ENCODE measurements at regions of chr6 and their contacts with region 1.

Region 1: DNA sequence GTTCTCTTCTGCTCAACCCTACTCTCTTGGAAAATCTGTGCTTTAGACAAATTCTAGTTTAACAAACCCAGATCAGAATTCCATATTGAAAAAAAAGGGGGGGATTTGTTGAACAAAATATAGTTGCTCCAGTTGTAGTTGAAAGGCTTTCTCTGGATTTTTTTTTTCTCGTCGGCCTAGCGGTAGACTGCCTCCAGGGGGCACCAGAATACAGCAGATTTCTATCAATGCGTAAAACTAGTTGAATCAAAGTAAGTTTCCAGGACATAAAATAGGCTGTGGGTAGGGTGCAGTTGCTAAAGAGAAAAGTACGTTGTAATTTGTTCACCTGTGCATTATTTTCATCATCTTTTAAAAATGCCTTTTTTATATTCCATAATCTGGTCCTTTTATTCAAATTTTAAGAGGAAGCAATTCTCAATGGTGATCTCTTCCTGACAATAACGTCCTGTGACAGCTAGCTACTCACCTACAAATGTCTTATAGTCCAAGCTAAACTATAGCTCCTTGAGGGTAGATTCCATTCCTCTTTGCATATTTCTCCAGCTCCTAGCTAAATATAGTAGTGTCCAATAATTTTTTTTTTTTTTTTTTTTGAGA is 105.4 kb downstream of the PERP start:
- DNase-seq: peak; percentile 53
- ATAC-seq: peak; percentile 70
- H3K4me3 ChIP-seq: no peak overlapping the region
- H3K27ac ChIP-seq: no peak overlapping the region
- H3K4me1 ChIP-seq: no peaks in the 10 kb centered on the region
- H3K27me3 ChIP-seq: peaks cover 9% of the 10 kb centered on the region
- CTCF ChIP-seq: peak; percentile 90
- POLR2A ChIP-seq: no peak
- RAD21 ChIP-seq: peak; percentile 91

Region 2: DNA sequence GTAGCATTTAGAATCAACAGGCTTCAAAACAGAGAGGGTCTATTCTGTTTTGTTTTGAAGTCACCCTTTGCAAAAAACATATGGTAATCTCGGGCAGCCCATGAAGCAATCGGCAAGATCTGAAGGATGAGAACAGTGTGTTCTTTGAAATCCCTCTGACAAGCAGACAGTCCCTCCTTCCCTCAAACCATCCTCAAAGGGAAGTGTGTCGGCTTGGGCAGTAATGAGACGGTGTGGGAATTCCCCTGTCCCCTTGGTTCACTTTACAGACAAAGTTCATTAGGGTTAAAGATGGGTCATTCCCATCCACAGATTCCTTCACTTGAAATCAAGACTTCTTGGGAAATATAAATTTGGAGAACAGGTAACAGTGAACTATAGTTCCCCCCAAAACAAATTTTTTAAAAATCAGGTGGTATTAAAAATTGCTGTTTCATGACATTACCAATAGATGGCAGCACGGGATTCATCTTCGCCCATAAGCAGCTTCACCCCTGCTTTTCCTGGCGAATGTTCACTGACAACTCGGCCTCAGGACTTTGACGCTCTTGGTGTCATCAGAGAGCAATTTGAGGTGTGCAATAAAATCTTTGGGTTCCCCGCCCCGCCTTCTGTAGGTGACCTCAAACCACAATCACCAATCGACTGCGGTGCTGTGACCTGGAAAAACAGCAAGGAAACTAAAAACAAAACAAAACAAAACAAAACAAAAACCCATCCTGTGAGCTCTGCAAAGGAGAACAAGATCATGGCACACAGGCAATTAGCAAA is 294.1 kb before region 1 on chr6:
- CTCF ChIA-PET with region 1: no interaction called
- POLR2A ChIA-PET with region 1: no interaction called
- dilution Hi-C with region 1: no loop called
- in situ Hi-C with region 1: no loop called
- intact Hi-C with region 1: loop called (anchors 1 kb)
- DNase-seq: peak; percentile 86
- ATAC-seq: peak; percentile 78
- H3K4me3 ChIP-seq: no peak overlapping the region; the same call in 1 of the 2 replicates
- H3K27ac ChIP-seq: no peak overlapping the region
- H3K4me1 ChIP-seq: no peaks in the 10 kb centered on the region; the same call in 1 of the 2 replicates
- H3K27me3 ChIP-seq: no peaks in the 10 kb centered on the region
- CTCF ChIP-seq: peak; percentile 89
- POLR2A ChIP-seq: no peak
- RAD21 ChIP-seq: peak; percentile 89

Region 3: GRCh38 chr6:138109042-138109997 is 107.5 kb after region 1 on chr6:
- CTCF ChIA-PET with region 1: interaction called, 15 read pairs
- POLR2A ChIA-PET with region 1: interaction called, 4 read pairs
- dilution Hi-C with region 1: no loop called
- in situ Hi-C with region 1: loop called (anchors 5 kb)
- intact Hi-C with region 1: loop called (anchors 1 kb)
- DNase-seq: peak; percentile 70
- ATAC-seq: peak; percentile 53; the same call in 1 of the 2 replicates
- H3K4me3 ChIP-seq: no peak overlapping the region
- H3K27ac ChIP-seq: no peak overlapping the region
- H3K4me1 ChIP-seq: peaks cover 9% of the 10 kb centered on the region
- H3K27me3 ChIP-seq: peaks cover 13% of the 10 kb centered on the region
- CTCF ChIP-seq: peak; percentile 98
- POLR2A ChIP-seq: no peak
- RAD21 ChIP-seq: peak; percentile 95

Region 4: DNA sequence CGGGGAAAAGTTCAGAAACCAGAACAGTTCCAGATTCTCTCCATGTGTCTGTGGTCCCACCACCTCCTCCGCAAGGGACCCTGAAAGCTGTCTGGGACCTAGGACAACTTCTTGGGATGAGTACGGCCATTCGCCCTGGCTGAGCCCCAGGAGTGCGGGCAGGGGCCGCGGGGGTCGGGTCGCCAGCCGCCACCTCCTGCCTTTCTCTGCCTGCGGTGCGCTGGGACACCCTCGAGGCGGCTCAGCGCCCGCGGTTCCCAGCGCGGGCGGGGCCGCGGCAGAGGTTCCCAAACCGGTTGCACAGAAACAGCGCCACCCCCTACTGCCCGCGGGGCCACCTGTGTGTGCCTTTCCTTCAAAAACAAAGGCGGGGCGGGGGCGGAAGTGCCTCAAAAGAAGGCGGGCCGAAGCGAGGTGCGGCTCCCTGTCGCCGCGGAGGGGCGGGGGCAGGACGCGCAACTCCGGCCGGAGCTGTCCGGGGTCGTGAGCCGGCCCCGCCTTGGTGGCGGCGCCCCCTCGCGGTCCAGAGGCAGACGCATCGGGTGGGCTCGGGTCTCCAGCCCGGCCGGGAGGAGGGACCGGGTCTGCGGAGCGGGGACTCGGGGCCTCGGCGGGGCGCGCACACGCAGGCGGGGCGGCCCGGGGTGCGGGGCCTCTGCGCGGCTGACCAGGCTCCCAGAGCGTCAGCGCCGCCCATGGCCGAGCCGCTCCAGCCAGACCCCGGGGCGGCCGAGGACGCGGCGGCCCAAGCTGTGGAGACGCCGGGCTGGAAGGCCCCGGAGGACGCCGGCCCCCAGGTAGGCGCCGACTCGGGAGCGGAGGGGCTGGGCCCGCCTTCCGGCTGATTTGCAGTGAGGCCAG is 402.2 kb after region 1 on chr6 and contains the start of gene HEBP2:
- CTCF ChIA-PET with region 1: no interaction called
- POLR2A ChIA-PET with region 1: no interaction called
- dilution Hi-C with region 1: no loop called
- in situ Hi-C with region 1: no loop called
- intact Hi-C with region 1: loop called (anchors 5 kb)
- DNase-seq: peak; percentile 65
- ATAC-seq: peak; percentile 88
- H3K4me3 ChIP-seq: peak within 1 kb of the TSS; percentile 79
- H3K27ac ChIP-seq: peak within 1 kb of the TSS; percentile 68
- H3K4me1 ChIP-seq: peaks cover 3% of the 10 kb centered on the region
- H3K27me3 ChIP-seq: no peaks in the 10 kb centered on the region
- CTCF ChIP-seq: peak; percentile 50
- POLR2A ChIP-seq: no peak
- RAD21 ChIP-seq: peak; percentile 33
- total RNA-seq, gene HEBP2: 3.9 and 5.6 TPM in 2 replicates

Region 5: DNA sequence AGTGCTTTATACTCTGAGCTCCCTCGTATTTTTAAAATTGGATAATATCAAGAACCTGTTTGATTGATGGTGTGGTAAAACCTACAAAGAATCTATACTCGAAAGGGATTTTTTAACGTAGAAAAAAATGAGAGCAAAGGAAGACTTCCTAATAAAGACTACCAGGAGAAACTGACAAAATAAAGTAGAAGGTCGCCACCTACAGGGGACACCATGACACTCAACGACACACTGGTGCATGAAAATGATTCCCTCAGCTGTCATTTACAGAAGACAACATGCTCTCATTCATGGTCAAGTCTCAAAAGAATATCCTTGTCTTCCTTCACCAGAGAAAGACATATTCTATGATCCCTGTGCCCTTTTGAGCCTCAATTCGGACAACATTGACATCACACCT is 507.5 kb after region 1 on chr6:
- CTCF ChIA-PET with region 1: no interaction called
- POLR2A ChIA-PET with region 1: no interaction called
- dilution Hi-C with region 1: no loop called
- in situ Hi-C with region 1: no loop called
- intact Hi-C with region 1: loop called (anchors 10 kb)
- DNase-seq: peak; percentile 52
- ATAC-seq: 0 out of 2 replicates have a peak, but pooled peaks have one; percentile 46
- H3K4me3 ChIP-seq: no peak overlapping the region
- H3K27ac ChIP-seq: no peak overlapping the region
- H3K4me1 ChIP-seq: no peaks in the 10 kb centered on the region
- H3K27me3 ChIP-seq: no peaks in the 10 kb centered on the region
- CTCF ChIP-seq: peak; percentile 55
- POLR2A ChIP-seq: no peak
- RAD21 ChIP-seq: peak; percentile 65